H1 (cell line): ENCODE measurements at regions of chr18 and their contacts with region 1.

Region 1: GRCh38 chr18:54269893-54270844 is 852 bp downstream of the POLI start:
- DNase-seq: peak in 1 of 2 experiments; percentile 82
- H3K4me3 ChIP-seq: peak overlapping the region; percentile 63 to 75 (median 70)
- H3K27ac ChIP-seq: peak overlapping the region; percentile 76
- H3K4me1 ChIP-seq: peaks cover 0 to 6% (median 0%) of the 10 kb centered on the region in 4 experiments; a peak in 3 of 7 replicates
- H3K27me3 ChIP-seq: no peaks in the 10 kb centered on the region
- CTCF ChIP-seq: peak in 2 of 3 experiments; percentile 6 to 46; a peak in 2 of 4 replicates
- EP300 ChIP-seq: no peak
- POLR2A ChIP-seq: peak in 1 of 2 experiments; percentile 75; a peak in 1 of 3 replicates
- RAD21 ChIP-seq: peak; percentile 37 to 41

Region 2: GRCh38 chr18:54109131-54109683 is 161.0 kb before region 1 on chr18:
- CTCF ChIA-PET with region 1: no interaction called
- POLR2A ChIA-PET with region 1: no interaction called
- DNase-seq: no peak
- H3K4me3 ChIP-seq: no peak overlapping the region
- H3K27ac ChIP-seq: no peak overlapping the region
- H3K4me1 ChIP-seq: no peaks in the 10 kb centered on the region
- H3K27me3 ChIP-seq: no peaks in the 10 kb centered on the region
- CTCF ChIP-seq: no peak
- EP300 ChIP-seq: no peak
- POLR2A ChIP-seq: no peak
- RAD21 ChIP-seq: no peak

Region 3: DNA sequence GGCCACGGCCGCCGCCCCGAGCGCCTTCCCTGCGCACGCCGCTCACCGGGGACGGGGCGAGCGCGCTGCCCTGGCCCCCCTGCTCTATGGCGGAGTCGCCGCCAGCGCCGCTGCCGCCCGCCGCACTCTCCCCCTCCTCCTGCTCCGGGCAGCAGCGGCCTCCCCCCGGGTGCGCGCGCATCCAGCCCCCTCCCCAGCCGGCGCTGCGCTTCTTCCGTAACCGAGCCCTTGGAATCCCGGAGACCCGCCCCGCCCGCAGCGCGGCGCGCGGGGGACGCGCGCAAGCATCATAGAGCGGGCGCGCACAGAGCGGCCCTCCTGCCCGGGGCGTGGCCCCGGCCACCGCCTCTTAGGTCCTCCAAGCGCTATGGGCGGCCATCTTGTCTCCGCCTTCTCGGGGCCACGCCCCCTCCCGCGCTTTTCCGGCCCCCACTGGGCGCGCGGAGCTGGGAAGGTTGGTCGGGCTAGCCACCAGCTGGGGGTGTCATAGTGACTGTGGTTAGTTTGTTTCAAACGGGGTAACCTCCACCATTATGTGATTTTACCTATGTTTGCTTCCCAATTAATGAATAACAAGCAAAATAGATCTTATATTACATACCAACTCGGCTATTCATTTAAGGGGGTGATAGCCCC is 45.7 kb before region 1 on chr18 and contains the start of gene MBD2:
- CTCF ChIA-PET with region 1: interaction called, 29 read pairs
- POLR2A ChIA-PET with region 1: interaction called, 17 read pairs
- DNase-seq: peak; percentile 89 to 99
- H3K4me3 ChIP-seq: peak within 1 kb of the TSS; percentile 69 to 74 (median 71)
- H3K27ac ChIP-seq: no peak within 1 kb of the TSS; the same call in 1 of the 2 replicates
- H3K4me1 ChIP-seq: peaks cover 3 to 10% (median 5%) of the 10 kb centered on the region in 4 experiments
- H3K27me3 ChIP-seq: no peaks in the 10 kb centered on the region
- CTCF ChIP-seq: peak in 2 of 3 experiments; percentile 27 to 33; a peak in 2 of 4 replicates
- EP300 ChIP-seq: no peak
- POLR2A ChIP-seq: peak in 1 of 2 experiments; percentile 73; a peak in 2 of 3 replicates
- RAD21 ChIP-seq: peak; percentile 42 to 57; a peak in 3 of 4 replicates
- total RNA-seq, gene MBD2: 36.2 TPM in 2 replicates

Region 4: GRCh38 chr18:54240629-54241107 is 29.5 kb before region 1 on chr18:
- CTCF ChIA-PET with region 1: interaction called, 10 read pairs
- POLR2A ChIA-PET with region 1: interaction called, 9 read pairs
- DNase-seq: no peak
- H3K4me3 ChIP-seq: no peak overlapping the region
- H3K27ac ChIP-seq: no peak overlapping the region
- H3K4me1 ChIP-seq: peaks cover 0 to 3% (median 0%) of the 10 kb centered on the region in 4 experiments; a peak in 1 of 7 replicates
- H3K27me3 ChIP-seq: no peaks in the 10 kb centered on the region
- CTCF ChIP-seq: no peak
- EP300 ChIP-seq: no peak
- POLR2A ChIP-seq: no peak
- RAD21 ChIP-seq: no peak

Region 5: DNA sequence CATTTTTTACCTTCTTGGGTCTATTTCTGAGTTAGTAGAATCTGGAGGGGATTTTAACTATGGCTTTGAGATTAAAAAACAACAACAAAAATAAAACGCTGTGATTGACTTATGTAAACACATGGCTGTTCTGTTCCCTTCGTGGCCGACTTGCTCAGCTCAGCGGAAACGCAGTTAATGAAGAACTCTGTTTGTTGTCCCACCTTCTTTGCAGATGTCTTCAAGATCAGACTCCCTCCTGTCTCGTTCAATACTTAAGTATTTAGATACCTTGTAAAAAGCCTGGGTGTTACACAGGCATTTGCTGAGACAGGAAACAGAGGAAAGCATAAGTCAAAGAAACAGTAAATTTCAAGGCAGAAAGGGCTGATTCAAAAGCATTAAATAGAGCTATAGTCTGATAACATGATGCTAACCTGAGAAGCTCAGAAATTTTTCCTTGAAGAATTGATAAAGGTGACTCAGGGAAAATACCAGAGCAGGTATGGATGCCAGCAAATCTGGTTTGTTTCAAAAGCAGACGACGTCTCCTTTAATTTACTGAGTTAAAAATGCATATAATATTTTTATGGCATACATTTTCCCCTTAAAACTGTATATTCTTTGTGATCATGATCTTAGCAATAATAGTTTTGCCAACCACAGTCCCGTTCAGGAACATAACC is 22.5 kb before region 1 on chr18:
- CTCF ChIA-PET with region 1: interaction called, 10 read pairs
- POLR2A ChIA-PET with region 1: interaction called, 16 read pairs
- DNase-seq: no peak
- H3K4me3 ChIP-seq: peak overlapping the region in 1 of 4 experiments; percentile 39; a peak in 2 of 8 replicates
- H3K27ac ChIP-seq: peak overlapping the region; percentile 67
- H3K4me1 ChIP-seq: peaks cover 0 to 22% (median 6%) of the 10 kb centered on the region in 4 experiments; a peak in 5 of 7 replicates
- H3K27me3 ChIP-seq: no peaks in the 10 kb centered on the region
- CTCF ChIP-seq: no peak
- EP300 ChIP-seq: no peak
- POLR2A ChIP-seq: no peak
- RAD21 ChIP-seq: no peak

Region 6: GRCh38 chr18:54280220-54280569 is 10.0 kb after region 1 on chr18:
- CTCF ChIA-PET with region 1: interaction called, 17 read pairs
- POLR2A ChIA-PET with region 1: interaction called, 27 read pairs
- DNase-seq: no peak
- H3K4me3 ChIP-seq: no peak overlapping the region
- H3K27ac ChIP-seq: no peak overlapping the region
- H3K4me1 ChIP-seq: no peaks in the 10 kb centered on the region; a peak in 1 of 7 replicates
- H3K27me3 ChIP-seq: no peaks in the 10 kb centered on the region
- CTCF ChIP-seq: no peak
- EP300 ChIP-seq: no peak
- POLR2A ChIP-seq: no peak
- RAD21 ChIP-seq: no peak

Region 7: DNA sequence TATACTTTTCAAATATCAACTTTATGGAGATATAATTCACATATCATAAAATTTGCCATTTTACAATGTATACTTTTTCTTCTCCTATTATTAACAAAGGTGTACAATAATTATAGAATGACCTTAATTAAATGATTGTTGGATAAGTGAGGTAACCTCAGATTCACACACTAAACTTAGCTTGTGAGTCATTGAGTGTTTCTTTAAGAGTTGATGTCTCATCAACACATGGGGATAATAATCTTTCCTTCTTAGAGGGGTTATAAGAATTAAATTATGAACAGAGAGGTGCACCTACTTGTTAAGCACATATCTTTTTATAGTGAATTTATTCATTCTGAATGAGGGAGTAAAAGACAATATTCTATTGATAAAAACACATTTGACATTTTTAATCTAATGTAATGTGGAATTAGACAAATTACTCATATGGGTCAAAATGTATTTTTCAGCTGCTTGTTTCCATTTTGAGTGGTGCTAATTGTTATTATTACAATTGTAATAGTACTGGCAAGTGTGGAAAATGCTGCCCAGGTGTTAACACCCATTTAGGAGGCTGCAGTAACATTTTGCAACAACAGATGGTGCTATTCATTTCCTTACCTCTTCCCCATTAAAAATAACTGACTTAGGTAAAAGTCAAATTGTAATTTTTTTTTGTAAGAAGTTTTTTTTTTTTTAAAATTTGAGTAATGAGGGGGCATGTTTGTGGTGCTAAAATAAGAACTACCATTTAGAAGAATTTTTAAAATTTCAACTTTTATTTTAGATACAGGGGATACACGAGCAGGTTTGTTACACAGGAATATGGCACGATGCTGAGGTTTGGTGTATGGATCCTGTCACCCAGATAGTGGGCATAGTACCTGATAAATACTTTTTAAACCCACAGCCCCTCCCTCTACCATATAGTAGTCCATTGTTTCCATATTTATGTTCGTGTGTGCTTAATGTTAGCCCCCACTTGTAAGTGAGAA is 288.7 kb after region 1 on chr18:
- CTCF ChIA-PET with region 1: no interaction called
- POLR2A ChIA-PET with region 1: no interaction called
- DNase-seq: no peak
- H3K4me3 ChIP-seq: no peak overlapping the region
- H3K27ac ChIP-seq: no peak overlapping the region
- H3K4me1 ChIP-seq: peaks cover 0 to 3% (median 1%) of the 10 kb centered on the region in 4 experiments; a peak in 5 of 7 replicates
- H3K27me3 ChIP-seq: no peaks in the 10 kb centered on the region
- CTCF ChIP-seq: peak in 2 of 3 experiments; percentile 36 to 49; a peak in 2 of 4 replicates
- EP300 ChIP-seq: no peak
- POLR2A ChIP-seq: no peak
- RAD21 ChIP-seq: peak; percentile 59 to 61